Dorsolateral prefrontal cortex (tissue), 120 donors: ENCODE measurements at regions of chr9 and their contacts with region 1.

Region 1: DNA sequence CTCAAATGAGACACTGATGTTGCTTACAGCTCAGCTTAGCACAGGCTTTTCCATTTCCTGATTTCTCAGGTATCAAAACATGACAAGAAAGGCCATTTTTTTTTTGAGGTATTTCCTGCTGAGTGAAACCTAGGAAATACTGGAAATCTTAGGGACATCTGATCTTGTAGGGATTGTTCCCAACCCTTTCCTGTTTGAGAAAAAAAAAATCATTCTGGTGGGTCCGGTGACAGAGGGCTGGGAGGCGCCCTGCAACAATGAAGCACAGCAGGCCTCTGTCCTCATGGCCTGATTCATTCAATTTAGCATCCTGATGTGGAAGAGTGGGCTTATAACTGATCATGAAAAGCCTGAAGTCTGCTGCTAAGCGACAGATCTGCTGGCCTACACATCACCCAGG is 3.0 kb upstream of the C9orf153 start:
- DNase-seq: no peak
- H3K4me3 ChIP-seq: no peak overlapping the region
- H3K27ac ChIP-seq: peak overlapping the region in 1 of 59 donors; percentile 20
- H3K27me3 ChIP-seq: no peaks in the 10 kb centered on the region
- CTCF ChIP-seq: no peak

Region 2: DNA sequence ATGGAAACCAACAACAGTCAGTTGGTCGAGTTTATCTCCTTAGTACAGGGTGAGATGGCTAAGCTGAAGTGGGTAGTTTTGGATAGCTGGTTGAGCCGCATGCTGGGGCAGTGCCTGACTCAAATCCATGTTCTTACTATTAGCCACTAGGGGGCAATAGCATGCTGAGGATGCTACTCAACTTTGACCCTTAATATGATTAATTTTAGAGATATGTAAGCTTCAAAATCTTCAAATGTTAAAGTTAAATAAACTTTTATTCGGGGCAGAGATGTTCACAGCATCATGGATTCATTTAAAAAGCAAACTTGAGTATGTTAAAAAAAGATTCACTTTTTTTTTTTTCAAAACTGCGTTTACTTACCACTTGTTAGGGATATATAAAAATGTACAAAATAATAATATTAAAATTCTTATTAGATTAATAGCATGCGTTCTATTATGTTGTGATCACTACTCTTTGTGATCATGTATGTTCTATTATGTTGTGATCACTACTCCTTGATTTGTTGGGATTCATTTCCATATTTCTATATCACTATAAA is 60.0 kb before region 1 on chr9:
- intact Hi-C with region 1: loop called in 1 of 2 experiments (anchors 10 kb)
- DNase-seq: no peak
- H3K4me3 ChIP-seq: no peak overlapping the region
- H3K27ac ChIP-seq: no peak overlapping the region
- H3K27me3 ChIP-seq: no peaks in the 10 kb centered on the region
- CTCF ChIP-seq: peak; percentile 52 to 86 (median 77)